WTC11 (cell line): ENCODE measurements at regions of chr20 and their contacts with region 1.

Region 1: DNA sequence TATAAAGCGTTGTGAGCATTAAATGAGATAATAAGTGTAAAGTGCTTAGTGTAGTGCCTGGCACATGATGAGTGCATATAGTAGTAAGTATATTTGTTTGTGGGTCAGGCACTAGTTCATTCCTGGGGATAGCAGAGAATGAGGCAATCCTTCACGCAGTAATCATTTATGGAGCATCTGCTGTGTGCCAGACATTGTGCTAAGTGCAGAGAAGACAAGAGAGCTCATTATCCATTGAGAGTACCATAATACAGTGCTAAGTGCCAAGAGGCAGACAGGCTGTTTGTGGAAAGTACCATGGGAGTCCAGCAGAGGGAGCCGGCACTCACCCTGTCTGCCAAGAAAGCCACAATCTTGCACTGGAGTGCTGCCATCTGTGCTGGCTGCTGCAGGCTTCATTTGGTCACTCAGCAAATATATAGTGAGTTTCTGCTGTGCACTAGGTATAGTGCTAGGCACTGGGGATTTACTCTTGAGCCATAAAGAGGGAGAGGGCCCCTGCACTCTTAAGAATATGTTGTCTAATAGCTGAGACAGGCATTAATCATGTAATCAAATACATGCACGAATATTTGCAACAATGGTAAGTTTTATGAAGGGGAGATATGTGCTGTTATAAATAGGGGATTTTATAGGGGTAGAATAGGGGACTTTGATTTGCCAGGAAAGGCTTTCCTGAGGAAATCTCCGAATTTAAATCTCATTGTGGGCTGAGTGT is 12.9 kb upstream of the MROH8 start:
- DNase-seq: peak; percentile 80
- ATAC-seq: peak; percentile 87
- H3K4me3 Mint-ChIP-seq: no peak overlapping the region
- H3K27ac Mint-ChIP-seq: peak overlapping the region; percentile 95
- H3K4me1 Mint-ChIP-seq: peaks cover 29% of the 10 kb centered on the region
- H3K27me3 Mint-ChIP-seq: no peaks in the 10 kb centered on the region
- CTCF ChIP-seq: peak; percentile 77

Region 2: GRCh38 chr20:37209661-37210314 is 17.5 kb after region 1 on chr20:
- CTCF ChIA-PET with region 1: interaction called, 10 read pairs
- POLR2A ChIA-PET with region 1: no interaction called
- DNase-seq: no peak
- ATAC-seq: no peak
- H3K4me3 Mint-ChIP-seq: no peak overlapping the region
- H3K27ac Mint-ChIP-seq: no peak overlapping the region
- H3K4me1 Mint-ChIP-seq: no peaks in the 10 kb centered on the region
- H3K27me3 Mint-ChIP-seq: no peaks in the 10 kb centered on the region
- CTCF ChIP-seq: no peak

Region 3: GRCh38 chr20:37243076-37243936 is 51.0 kb after region 1 on chr20:
- CTCF ChIA-PET with region 1: interaction called, 14 read pairs
- POLR2A ChIA-PET with region 1: no interaction called
- DNase-seq: peak; percentile 56
- ATAC-seq: peak; percentile 81
- H3K4me3 Mint-ChIP-seq: no peak overlapping the region
- H3K27ac Mint-ChIP-seq: peak overlapping the region; percentile 97
- H3K4me1 Mint-ChIP-seq: peaks cover 22% of the 10 kb centered on the region
- H3K27me3 Mint-ChIP-seq: no peaks in the 10 kb centered on the region
- CTCF ChIP-seq: no peak

Region 4: DNA sequence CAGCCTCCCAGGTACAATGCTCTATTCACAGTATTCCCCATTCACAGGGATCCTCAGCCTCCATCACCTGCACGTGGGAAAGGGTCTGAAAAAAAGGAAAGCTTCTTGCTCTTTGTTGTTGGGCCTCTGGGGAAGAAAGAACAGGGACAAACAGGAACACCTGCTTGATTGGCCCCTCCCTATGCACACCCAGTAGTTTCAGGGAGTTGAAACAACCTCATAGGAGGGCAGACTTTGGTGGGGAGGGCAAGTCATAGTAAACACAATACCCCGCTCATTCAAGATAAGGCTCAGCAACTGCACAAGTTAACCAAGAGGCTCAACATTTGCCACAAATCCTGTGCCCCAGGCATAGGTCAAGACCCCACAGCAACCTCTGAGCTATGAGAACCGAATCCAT is 67.6 kb after region 1 on chr20:
- CTCF ChIA-PET with region 1: interaction called, 12 read pairs
- POLR2A ChIA-PET with region 1: no interaction called
- DNase-seq: no peak
- ATAC-seq: no peak
- H3K4me3 Mint-ChIP-seq: no peak overlapping the region
- H3K27ac Mint-ChIP-seq: 0 out of 2 replicates have a peak overlapping the region, but pooled peaks have one; percentile 15
- H3K4me1 Mint-ChIP-seq: peaks cover 40% of the 10 kb centered on the region
- H3K27me3 Mint-ChIP-seq: peaks cover 5% of the 10 kb centered on the region; the same call in 1 of the 2 replicates
- CTCF ChIP-seq: no peak